Ovary (tissue), 10 donors: ENCODE measurements at regions of chr22 and their contacts with region 1.

Region 1: DNA sequence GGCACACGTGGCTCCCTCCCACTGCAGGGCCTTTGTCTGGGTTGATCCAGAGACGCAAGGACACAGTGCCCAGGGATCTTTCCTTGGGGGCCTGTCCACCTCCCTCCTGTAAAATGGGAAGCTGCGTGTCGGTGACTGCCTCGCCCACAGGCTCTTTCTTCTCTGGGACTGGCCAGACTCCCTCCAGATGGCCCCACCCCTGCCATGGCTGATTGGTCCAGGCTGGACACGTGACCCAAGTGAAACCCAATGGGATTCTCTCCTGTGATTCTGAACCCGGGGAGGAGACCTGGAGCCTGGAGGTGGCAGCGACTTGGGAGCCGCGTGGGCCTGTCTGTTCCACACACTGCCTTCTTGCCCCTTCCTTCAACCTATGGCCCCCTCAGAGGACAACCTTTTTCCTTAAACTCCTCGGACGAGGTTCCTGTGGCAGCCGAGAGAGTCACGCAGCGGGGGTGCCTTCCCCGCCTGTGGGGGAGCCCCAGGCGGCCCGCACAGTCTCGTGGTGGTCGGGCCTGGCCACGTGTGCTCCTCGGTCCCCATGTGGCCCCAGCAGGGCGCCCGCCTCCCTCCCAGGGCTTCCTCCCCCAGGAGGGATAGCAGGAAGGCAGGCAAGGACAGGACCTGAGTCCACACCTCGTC is 12.4 kb upstream of the MPPED1 start:
- DNase-seq: no peak
- H3K4me3 ChIP-seq: no peak overlapping the region
- H3K27ac ChIP-seq: no peak overlapping the region
- H3K4me1 ChIP-seq: no peaks in the 10 kb centered on the region
- H3K27me3 ChIP-seq: no peaks in the 10 kb centered on the region
- CTCF ChIP-seq: no peak
- EP300 ChIP-seq: no peak
- POLR2A ChIP-seq: no peak

Region 2: GRCh38 chr22:43689356-43689755 is 289.9 kb after region 1 on chr22:
- intact Hi-C with region 1: no loop called
- DNase-seq: no peak
- H3K4me3 ChIP-seq: no peak overlapping the region
- H3K27ac ChIP-seq: no peak overlapping the region
- H3K4me1 ChIP-seq: no peaks in the 10 kb centered on the region
- H3K27me3 ChIP-seq: no peaks in the 10 kb centered on the region
- CTCF ChIP-seq: no peak
- EP300 ChIP-seq: no peak
- POLR2A ChIP-seq: no peak

Region 3: DNA sequence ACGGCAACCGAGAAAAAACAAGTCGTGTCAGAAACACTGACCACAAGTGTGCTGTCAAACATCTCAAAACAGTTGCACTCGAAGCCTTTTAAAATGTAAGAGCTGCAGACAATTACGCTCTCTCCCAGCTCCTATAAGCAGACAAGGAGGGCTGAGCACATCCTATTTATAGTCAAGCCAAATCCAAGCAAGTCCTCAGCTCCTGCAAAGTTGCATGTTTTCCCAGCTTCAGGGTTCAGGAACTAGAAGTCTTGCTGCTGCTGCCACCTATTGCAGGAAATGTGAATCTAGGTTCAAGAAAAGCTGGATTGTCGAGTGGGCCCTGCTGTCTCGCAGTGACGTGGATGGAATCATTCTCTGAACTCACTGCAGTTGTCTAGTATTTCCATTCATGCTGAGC is 397.1 kb after region 1 on chr22:
- intact Hi-C with region 1: loop called in 2 of 4 experiments (anchors 10 kb)
- DNase-seq: no peak
- H3K4me3 ChIP-seq: no peak overlapping the region
- H3K27ac ChIP-seq: no peak overlapping the region
- H3K4me1 ChIP-seq: no peaks in the 10 kb centered on the region
- H3K27me3 ChIP-seq: no peaks in the 10 kb centered on the region
- CTCF ChIP-seq: no peak
- EP300 ChIP-seq: no peak
- POLR2A ChIP-seq: no peak

Region 4: GRCh38 chr22:43826142-43827002 is 426.9 kb after region 1 on chr22:
- intact Hi-C with region 1: loop called in 1 of 4 experiments (anchors 10 kb)
- DNase-seq: peak in 4 of 5 donors; percentile 47 to 58 (median 55)
- H3K4me3 ChIP-seq: no peak overlapping the region
- H3K27ac ChIP-seq: peak overlapping the region in 1 of 2 donors; percentile 57
- H3K4me1 ChIP-seq: peaks cover 11% of the 10 kb centered on the region
- H3K27me3 ChIP-seq: no peaks in the 10 kb centered on the region
- CTCF ChIP-seq: no peak
- EP300 ChIP-seq: no peak
- POLR2A ChIP-seq: no peak

Region 5: GRCh38 chr22:43884600-43885325 is 485.3 kb after region 1 on chr22:
- intact Hi-C with region 1: loop called in 1 of 4 experiments (anchors 10 kb)
- DNase-seq: peak; percentile 63 to 86 (median 77)
- H3K4me3 ChIP-seq: no peak overlapping the region
- H3K27ac ChIP-seq: no peak overlapping the region
- H3K4me1 ChIP-seq: no peaks in the 10 kb centered on the region
- H3K27me3 ChIP-seq: no peaks in the 10 kb centered on the region
- CTCF ChIP-seq: peak; percentile 49 to 62 (median 55)
- EP300 ChIP-seq: no peak
- POLR2A ChIP-seq: no peak

Region 6: DNA sequence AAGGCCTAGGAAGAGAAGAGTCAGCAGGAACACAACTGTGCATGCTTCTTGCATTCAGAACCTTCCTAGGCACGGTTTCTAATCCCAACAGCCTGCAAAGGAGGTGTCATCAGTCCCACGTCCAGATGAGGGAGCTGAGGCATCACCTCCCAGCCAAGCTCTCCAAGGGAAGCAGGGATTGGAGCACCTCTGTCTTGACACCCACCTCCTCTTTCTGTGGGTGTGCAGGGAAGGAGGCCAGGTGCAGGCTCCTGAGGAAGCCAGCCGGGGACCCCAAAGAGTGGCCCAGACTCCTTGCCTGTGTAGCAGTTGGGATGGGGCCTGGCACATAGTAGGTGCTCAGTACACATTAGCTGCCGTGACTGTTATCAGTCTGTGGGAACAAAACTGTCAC is 490.4 kb after region 1 on chr22:
- intact Hi-C with region 1: loop called in 2 of 4 experiments (anchors 5 to 10 kb)
- DNase-seq: no peak
- H3K4me3 ChIP-seq: no peak overlapping the region
- H3K27ac ChIP-seq: no peak overlapping the region
- H3K4me1 ChIP-seq: no peaks in the 10 kb centered on the region
- H3K27me3 ChIP-seq: no peaks in the 10 kb centered on the region
- CTCF ChIP-seq: no peak
- EP300 ChIP-seq: no peak
- POLR2A ChIP-seq: no peak

Region 7: GRCh38 chr22:44639001-44639760 is 1239.7 kb after region 1 on chr22:
- intact Hi-C with region 1: loop called in 1 of 4 experiments (anchors 10 kb)
- DNase-seq: peak in 1 of 5 donors; percentile 35
- H3K4me3 ChIP-seq: no peak overlapping the region
- H3K27ac ChIP-seq: no peak overlapping the region
- H3K4me1 ChIP-seq: no peaks in the 10 kb centered on the region
- H3K27me3 ChIP-seq: no peaks in the 10 kb centered on the region
- CTCF ChIP-seq: no peak
- EP300 ChIP-seq: no peak
- POLR2A ChIP-seq: no peak

Region 8: DNA sequence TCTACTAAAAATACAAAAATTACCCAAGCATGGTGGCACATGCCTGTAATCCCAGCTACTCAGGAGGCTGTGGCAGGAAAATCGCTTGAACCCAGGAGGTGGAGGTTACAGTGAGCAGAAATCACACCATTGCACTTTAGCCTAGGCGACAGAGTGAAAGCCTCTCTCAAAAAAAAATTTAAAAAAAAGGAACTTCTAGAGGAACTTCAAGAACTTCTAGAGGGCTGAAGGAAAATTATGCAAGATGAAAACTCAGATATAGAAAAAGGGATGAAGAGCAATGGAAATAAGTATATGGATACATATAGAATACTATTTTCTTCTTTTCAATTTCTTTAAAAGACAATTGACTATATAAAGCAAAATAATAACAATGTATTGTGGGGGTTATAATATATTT is 1251.3 kb after region 1 on chr22:
- intact Hi-C with region 1: no loop called
- DNase-seq: no peak
- H3K4me3 ChIP-seq: no peak overlapping the region
- H3K27ac ChIP-seq: no peak overlapping the region
- H3K4me1 ChIP-seq: peaks cover 10% of the 10 kb centered on the region
- H3K27me3 ChIP-seq: no peaks in the 10 kb centered on the region
- CTCF ChIP-seq: no peak
- EP300 ChIP-seq: no peak
- POLR2A ChIP-seq: no peak